OCI-LY7 (cell line): ENCODE measurements at regions of chr1 and their contacts with region 1.

Region 1: DNA sequence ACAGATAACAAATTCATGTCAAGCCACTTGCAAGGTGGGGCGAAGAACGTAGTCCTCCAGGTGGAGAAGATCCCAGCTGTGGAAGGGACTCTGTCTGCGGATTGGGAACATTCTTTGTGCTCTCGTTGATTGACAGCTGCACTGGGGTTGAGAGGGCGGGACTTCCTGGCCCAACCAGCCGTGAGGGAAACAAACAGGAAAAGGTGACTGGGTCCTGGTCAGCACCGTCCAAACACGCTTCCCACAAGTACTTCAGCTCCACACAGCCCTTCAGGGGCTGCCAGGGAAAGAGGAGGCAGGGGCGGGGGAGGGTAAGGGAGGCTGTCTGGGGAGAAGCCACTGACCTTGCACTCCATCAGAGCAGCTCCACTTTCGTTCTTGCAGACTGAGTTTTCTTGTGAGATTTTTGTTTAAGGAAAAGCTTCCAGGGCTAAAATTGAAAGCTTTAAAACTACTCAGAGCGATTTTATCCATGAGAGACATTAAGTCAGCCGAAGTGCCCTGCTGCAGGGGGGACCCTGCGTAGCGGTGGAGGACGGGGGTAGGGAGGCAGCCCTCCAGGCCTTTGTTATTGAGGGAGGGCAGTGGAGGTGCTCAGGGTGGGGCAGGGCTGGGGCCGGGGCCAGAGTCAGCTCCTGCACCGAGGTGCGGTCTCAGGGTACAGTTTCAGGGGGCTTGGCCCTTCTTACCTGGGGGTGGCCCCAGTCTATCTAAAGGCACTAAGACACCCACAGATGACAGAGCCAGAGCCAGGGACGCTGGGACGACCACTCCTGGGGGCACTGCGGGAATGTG is 21.6 kb upstream of the STUM start:
- DNase-seq: peak; percentile 67
- H3K4me3 ChIP-seq: peak overlapping the region; percentile 21
- H3K27ac ChIP-seq: no peak overlapping the region
- H3K4me1 ChIP-seq: peaks cover 10% of the 10 kb centered on the region
- CTCF ChIP-seq: no peak

Region 2: GRCh38 chr1:226576601-226577000 is 49.6 kb after region 1 on chr1:
- CTCF ChIA-PET with region 1: no interaction called
- POLR2A ChIA-PET with region 1: no interaction called
- intact Hi-C with region 1: no loop called
- DNase-seq: no peak
- H3K4me3 ChIP-seq: no peak overlapping the region
- H3K27ac ChIP-seq: no peak overlapping the region
- H3K4me1 ChIP-seq: no peaks in the 10 kb centered on the region
- CTCF ChIP-seq: no peak

Region 3: GRCh38 chr1:226589008-226589733 is 62.2 kb after region 1 on chr1:
- CTCF ChIA-PET with region 1: interaction called, 12 read pairs
- POLR2A ChIA-PET with region 1: no interaction called
- intact Hi-C with region 1: no loop called
- DNase-seq: no peak
- H3K4me3 ChIP-seq: no peak overlapping the region
- H3K27ac ChIP-seq: no peak overlapping the region
- H3K4me1 ChIP-seq: no peaks in the 10 kb centered on the region
- CTCF ChIP-seq: no peak